ENCODE measurements at regions of chr18 and their contacts with region 1.

Region 1: GRCh38 chr18:35231052-35231451 is 9.8 kb upstream of the ZNF397 start:
- DNase-seq: peak; percentile 72 to 86 (median 81)
- ATAC-seq: peak; percentile 84 to 94 (median 92)
- H3K4me3 ChIP-seq: peak overlapping the region in 8 of 12 donors; percentile 1 to 34 (median 20)
- H3K27ac ChIP-seq: no peak overlapping the region
- H3K4me1 ChIP-seq: peaks cover 0 to 5% (median 0%) of the 10 kb centered on the region in 12 donors
- H3K27me3 ChIP-seq: peaks cover 0 to 3% (median 0%) of the 10 kb centered on the region in 9 donors
- CTCF ChIP-seq: peak; percentile 91 to 97 (median 96)
- POLR2A ChIP-seq: no peak

Region 2: GRCh38 chr18:35355140-35355618 is 124.1 kb after region 1 on chr18:
- intact Hi-C with region 1: loop called (anchors 1 to 5 kb)
- DNase-seq: peak; percentile 69 to 78 (median 73)
- ATAC-seq: peak; percentile 69 to 99 (median 98)
- H3K4me3 ChIP-seq: peak overlapping the region in 5 of 12 donors; percentile 20 to 42 (median 30)
- H3K27ac ChIP-seq: peak overlapping the region in 1 of 12 donors; percentile 10
- H3K4me1 ChIP-seq: peaks cover 0 to 7% (median 0%) of the 10 kb centered on the region in 12 donors
- H3K27me3 ChIP-seq: no peaks in the 10 kb centered on the region
- CTCF ChIP-seq: peak; percentile 49 to 84 (median 69)
- POLR2A ChIP-seq: no peak

Region 3: DNA sequence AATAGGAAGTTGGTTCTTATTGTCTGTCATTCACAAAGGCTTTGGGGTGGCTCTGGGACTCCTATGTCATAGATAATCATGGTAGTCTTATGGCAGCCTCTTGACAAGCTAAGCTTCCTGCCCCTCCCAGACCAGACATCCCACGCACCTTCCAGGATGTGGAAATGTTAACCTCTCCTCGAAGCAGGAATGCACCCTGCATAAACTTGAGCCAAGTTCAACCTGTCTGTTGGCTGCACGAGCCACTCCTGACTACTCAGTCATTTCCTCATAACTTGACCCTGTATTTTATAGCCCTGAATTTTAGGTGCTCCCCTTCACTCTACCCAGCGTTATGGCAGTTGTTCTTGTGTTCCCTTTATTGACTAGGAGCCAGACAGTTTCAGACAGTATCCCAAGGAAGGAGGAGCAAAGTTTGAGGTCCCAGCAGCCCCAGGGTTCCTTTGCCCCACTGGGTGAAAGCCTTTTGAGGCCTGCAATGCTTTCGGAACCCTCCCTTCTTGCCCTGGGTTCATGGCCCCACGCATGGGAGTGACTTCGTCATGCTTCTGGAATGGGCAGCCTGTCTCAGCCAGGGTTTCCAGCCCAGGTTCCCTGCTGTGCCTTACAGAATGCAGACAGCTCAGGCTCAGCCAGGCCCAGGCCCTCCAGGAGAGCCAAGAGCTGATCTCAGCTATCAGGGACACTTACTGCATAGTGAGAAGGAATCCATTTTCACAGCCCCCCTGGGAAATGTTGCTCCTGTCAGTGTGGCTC is 282.3 kb after region 1 on chr18:
- intact Hi-C with region 1: loop called in 1 of 10 experiments (anchors 10 kb)
- DNase-seq: peak in 4 of 5 donors; percentile 47 to 70 (median 65)
- ATAC-seq: peak; percentile 71 to 86 (median 80)
- H3K4me3 ChIP-seq: no peak overlapping the region
- H3K27ac ChIP-seq: peak overlapping the region in 7 of 12 donors; percentile 3 to 59 (median 29)
- H3K4me1 ChIP-seq: peaks cover 0 to 35% (median 14%) of the 10 kb centered on the region in 12 donors
- H3K27me3 ChIP-seq: no peaks in the 10 kb centered on the region
- CTCF ChIP-seq: no peak
- POLR2A ChIP-seq: no peak

Measured in heart left ventricle (tissue), 16 donors.